Left ventricle myocardium superior (tissue), 1 donor: ENCODE measurements at regions of chr18 and their contacts with region 1.

Region 1: DNA sequence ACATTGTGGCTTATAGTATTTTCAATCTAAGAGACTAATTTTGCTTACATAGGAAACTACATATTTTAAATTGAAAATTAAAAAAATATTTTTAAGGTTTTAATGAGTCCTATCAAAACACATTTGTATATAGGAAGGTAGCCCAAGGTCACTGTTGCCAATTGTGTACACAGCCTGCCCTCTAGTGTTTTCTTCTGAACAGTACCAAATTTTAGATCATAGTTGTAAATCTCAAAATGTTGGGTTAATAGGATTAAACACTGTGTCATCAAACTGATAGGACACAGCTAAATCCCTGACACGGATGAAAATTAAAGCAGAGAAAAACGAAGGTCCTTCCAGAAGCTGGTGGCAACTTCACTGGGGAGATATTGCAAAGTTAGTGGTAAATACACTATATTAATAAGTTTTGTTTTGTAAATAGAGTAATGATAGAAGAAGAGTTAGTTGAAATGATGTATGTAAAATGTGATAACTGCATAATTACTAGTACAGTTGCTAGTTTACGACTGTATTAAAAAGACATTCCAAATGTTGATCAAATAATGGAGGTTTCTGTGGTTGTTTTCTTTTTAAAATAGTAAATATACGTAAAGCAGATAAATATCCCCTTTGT is 19.7 kb downstream of the CLUL1 start:
- DNase-seq: no peak
- ATAC-seq: peak; percentile 73

Region 2: GRCh38 chr18:286515-287310 is 329.8 kb before region 1 on chr18:
- intact Hi-C with region 1: loop called (anchors 5 kb)
- DNase-seq: no peak
- ATAC-seq: no peak